ENCODE measurements at regions of chr3 and their contacts with region 1.

Region 1: GRCh38 chr3:122112754-122113153 is 57.6 kb downstream of the CD86 start:
- DNase-seq: peak; percentile 42
- ATAC-seq: peak; percentile 73
- H3K4me3 ChIP-seq: no peak overlapping the region
- H3K27ac ChIP-seq: no peak overlapping the region
- H3K4me1 ChIP-seq: no peaks in the 10 kb centered on the region
- H3K27me3 ChIP-seq: peaks cover 11% of the 10 kb centered on the region
- CTCF ChIP-seq: peak; percentile 41

Region 2: DNA sequence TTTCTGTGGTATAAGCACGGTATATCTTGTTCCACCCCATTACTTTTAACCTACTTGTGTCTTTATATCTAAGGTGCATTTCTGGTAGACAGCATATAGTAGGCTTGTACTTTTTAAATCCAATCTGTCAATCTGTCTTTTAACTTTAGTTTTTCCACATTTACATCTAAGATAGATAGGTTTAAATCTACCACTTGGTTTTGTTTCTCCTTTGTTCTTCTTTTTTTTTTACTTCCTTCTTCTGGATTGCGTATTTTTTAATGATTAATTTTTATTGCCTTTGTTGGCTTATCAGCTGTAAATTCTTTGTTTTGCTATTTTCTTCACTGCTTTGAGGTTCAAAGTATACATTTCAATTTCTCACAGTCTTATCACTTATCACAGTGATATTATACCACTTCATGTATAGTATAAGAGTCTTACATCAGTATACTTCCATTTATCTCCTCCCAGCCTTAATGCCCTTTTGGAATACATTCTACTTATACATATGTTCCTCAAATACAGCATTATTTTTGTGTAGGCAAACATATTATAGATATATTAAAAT is 308.9 kb before region 1 on chr3:
- CTCF ChIA-PET with region 1: no interaction called
- POLR2A ChIA-PET with region 1: no interaction called
- intact Hi-C with region 1: loop called (anchors 5 kb)
- DNase-seq: no peak
- ATAC-seq: no peak
- H3K4me3 ChIP-seq: no peak overlapping the region
- H3K27ac ChIP-seq: no peak overlapping the region
- H3K4me1 ChIP-seq: no peaks in the 10 kb centered on the region
- H3K27me3 ChIP-seq: no peaks in the 10 kb centered on the region
- CTCF ChIP-seq: no peak

Region 3: DNA sequence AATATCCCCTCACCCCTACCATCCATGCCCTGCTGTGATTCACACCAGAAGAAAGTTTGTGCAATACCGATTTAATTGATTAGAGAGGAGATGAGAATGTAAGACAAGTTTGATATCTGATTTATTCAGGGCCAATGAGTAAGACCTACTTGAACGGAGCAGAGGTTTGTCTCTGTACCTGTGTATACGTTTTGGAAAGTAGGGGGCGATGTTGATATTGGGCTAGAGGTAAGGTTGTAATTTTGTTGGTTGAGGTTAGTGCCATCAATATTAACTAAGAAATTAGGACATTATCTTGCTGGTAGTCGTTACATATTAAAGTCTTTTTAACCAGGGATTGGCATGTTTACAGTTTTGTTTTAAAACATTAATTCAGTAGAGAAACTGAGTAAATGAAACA is 257.2 kb before region 1 on chr3:
- CTCF ChIA-PET with region 1: no interaction called
- POLR2A ChIA-PET with region 1: no interaction called
- intact Hi-C with region 1: loop called (anchors 1 kb)
- DNase-seq: peak; percentile 73
- ATAC-seq: peak; percentile 72
- H3K4me3 ChIP-seq: no peak overlapping the region
- H3K27ac ChIP-seq: no peak overlapping the region
- H3K4me1 ChIP-seq: no peaks in the 10 kb centered on the region
- H3K27me3 ChIP-seq: no peaks in the 10 kb centered on the region
- CTCF ChIP-seq: peak; percentile 84

Region 4: GRCh38 chr3:121883507-121883906 is 229.2 kb before region 1 on chr3:
- CTCF ChIA-PET with region 1: no interaction called
- POLR2A ChIA-PET with region 1: no interaction called
- intact Hi-C with region 1: loop called (anchors 1 kb)
- DNase-seq: peak; percentile 89
- ATAC-seq: peak; percentile 82
- H3K4me3 ChIP-seq: no peak overlapping the region
- H3K27ac ChIP-seq: no peak overlapping the region
- H3K4me1 ChIP-seq: peaks cover 9% of the 10 kb centered on the region; the same call in 1 of the 2 replicates
- H3K27me3 ChIP-seq: no peaks in the 10 kb centered on the region
- CTCF ChIP-seq: peak; percentile 95

Region 5: GRCh38 chr3:121979734-121980449 is 132.9 kb before region 1 on chr3:
- CTCF ChIA-PET with region 1: no interaction called
- POLR2A ChIA-PET with region 1: no interaction called
- intact Hi-C with region 1: loop called (anchors 2 kb)
- DNase-seq: peak; percentile 92
- ATAC-seq: peak; percentile 84
- H3K4me3 ChIP-seq: peak overlapping the region; percentile 30; the same call in 1 of the 2 replicates
- H3K27ac ChIP-seq: peak overlapping the region; percentile 84
- H3K4me1 ChIP-seq: peaks cover 47% of the 10 kb centered on the region
- H3K27me3 ChIP-seq: no peaks in the 10 kb centered on the region
- CTCF ChIP-seq: no peak

Region 6: GRCh38 chr3:122356415-122356814 is 243.7 kb after region 1 on chr3:
- CTCF ChIA-PET with region 1: no interaction called
- POLR2A ChIA-PET with region 1: no interaction called
- intact Hi-C with region 1: loop called (anchors 5 kb)
- DNase-seq: peak; percentile 76
- ATAC-seq: peak; percentile 72
- H3K4me3 ChIP-seq: no peak overlapping the region
- H3K27ac ChIP-seq: no peak overlapping the region
- H3K4me1 ChIP-seq: peaks cover 10% of the 10 kb centered on the region
- H3K27me3 ChIP-seq: no peaks in the 10 kb centered on the region
- CTCF ChIP-seq: peak; percentile 90

Measured in PC-3 (cell line).